IMR-90 (cell line): ENCODE measurements at regions of chr9 and their contacts with region 1.

Region 1: DNA sequence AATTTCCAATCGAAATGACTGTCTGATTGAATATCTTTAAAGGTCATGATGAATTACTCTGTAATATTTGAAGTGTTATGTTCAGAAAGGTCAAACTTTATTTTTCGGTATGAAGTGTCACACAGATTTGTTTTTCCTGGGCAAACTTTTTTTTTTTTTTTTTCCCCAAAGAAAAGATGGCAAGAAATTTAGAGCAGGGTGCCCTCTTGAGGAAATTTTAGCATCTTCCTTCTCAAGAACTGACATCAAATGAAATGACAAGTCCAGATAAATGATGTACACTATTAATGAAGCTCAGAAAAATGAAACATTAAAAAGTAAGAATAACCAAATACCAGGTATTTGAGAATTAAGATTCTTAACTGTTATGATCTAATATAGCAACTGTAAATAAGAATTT is 123.6 kb downstream of the INVS start:
- DNase-seq: peak; percentile 53
- ATAC-seq: 0 out of 2 replicates have a peak, but pooled peaks have one; percentile 27
- H3K4me3 ChIP-seq: no peak overlapping the region
- H3K27ac ChIP-seq: no peak overlapping the region
- H3K4me1 ChIP-seq: peaks cover 2% of the 10 kb centered on the region
- H3K27me3 ChIP-seq: no peaks in the 10 kb centered on the region
- CTCF ChIP-seq: peak; percentile 61
- POLR2A ChIP-seq: no peak
- RAD21 ChIP-seq: peak; percentile 64

Region 2: DNA sequence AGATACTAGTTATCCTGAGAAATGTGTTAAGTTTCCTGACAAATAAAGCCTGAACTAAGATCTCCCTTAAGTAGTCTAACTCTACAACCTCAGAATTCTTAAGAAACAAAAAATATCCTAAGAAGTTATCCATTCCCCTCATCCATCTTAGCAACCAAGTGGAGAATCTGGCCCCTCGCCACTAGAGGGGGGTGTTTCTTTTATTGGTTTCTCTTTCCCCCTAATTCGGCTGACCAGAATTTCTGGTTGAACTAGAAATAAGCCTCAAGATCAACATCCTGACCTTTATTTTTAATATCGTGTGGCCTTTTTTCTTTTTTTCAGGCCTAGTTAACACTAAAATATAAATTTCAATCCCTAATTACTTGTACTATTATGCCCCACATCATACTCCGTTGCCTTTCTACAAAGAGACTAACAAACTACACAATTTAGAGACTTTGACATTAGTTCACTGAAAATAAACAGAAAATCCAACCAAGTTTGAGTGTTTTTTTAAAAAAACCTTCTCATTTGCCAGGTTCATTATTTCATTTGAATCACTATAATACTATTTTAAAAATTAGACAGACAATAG is 415.3 kb before region 1 on chr9:
- CTCF ChIA-PET with region 1: no interaction called
- POLR2A ChIA-PET with region 1: no interaction called
- dilution Hi-C with region 1: no loop called
- in situ Hi-C with region 1: loop called (anchors 25 kb)
- intact Hi-C with region 1: loop called (anchors 5 kb)
- DNase-seq: peak; percentile 59
- ATAC-seq: peak; percentile 82
- H3K4me3 ChIP-seq: no peak overlapping the region
- H3K27ac ChIP-seq: no peak overlapping the region
- H3K4me1 ChIP-seq: no peaks in the 10 kb centered on the region
- H3K27me3 ChIP-seq: no peaks in the 10 kb centered on the region
- CTCF ChIP-seq: peak; percentile 82
- POLR2A ChIP-seq: no peak
- RAD21 ChIP-seq: peak; percentile 65

Region 3: DNA sequence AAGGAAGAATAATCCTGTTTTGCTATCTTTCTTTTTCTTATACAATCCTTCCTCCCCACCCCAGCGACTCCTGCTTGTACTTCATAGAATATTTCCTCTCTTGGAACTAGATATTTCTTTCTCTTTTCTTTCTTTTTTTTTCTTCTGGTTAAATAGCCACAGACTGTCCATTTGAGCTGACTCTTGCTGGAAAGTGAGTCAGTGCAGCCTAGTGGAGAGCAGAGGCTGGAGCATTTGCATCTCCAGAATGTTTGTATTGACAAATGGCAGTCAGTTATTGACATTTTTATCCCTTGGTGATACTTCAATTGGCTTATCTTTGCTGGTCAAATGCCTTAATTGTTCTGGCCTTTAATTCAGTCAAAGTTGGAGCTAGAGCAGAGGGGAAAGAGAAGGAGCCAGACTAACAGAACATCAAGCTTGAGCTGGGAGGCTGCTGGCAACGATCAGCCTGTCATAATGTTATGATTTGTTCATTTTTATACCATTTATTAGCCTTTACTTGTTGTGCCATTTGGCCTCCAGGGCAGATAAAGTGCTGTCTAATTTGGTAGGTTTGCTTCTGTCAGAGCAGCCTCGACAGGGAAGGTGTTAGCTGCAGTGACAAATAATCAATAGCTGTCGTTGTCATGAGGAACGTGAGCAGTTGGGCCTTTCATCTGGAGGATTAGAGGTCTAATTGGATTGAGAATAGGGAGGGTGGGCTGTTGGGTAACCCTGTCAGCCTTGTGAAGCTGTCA is 54.6 kb before region 1 on chr9:
- CTCF ChIA-PET with region 1: no interaction called
- POLR2A ChIA-PET with region 1: no interaction called
- dilution Hi-C with region 1: no loop called
- in situ Hi-C with region 1: no loop called
- intact Hi-C with region 1: no loop called
- DNase-seq: peak; percentile 27
- ATAC-seq: peak; percentile 70
- H3K4me3 ChIP-seq: no peak overlapping the region
- H3K27ac ChIP-seq: no peak overlapping the region
- H3K4me1 ChIP-seq: peaks cover 3% of the 10 kb centered on the region
- H3K27me3 ChIP-seq: no peaks in the 10 kb centered on the region
- CTCF ChIP-seq: no peak; the same call in 1 of the 2 replicates
- POLR2A ChIP-seq: no peak
- RAD21 ChIP-seq: no peak